Ovary (tissue), 10 donors: ENCODE measurements at regions of chr4 and their contacts with region 1.

Region 1: GRCh38 chr4:187071946-187072600 is 348.4 kb upstream of the FAT1 start:
- DNase-seq: no peak
- H3K4me3 ChIP-seq: no peak overlapping the region
- H3K27ac ChIP-seq: no peak overlapping the region
- H3K4me1 ChIP-seq: no peaks in the 10 kb centered on the region
- H3K27me3 ChIP-seq: no peaks in the 10 kb centered on the region
- CTCF ChIP-seq: no peak
- EP300 ChIP-seq: no peak
- POLR2A ChIP-seq: no peak

Region 2: GRCh38 chr4:186781032-186781917 is 290.8 kb before region 1 on chr4:
- intact Hi-C with region 1: no loop called
- DNase-seq: no peak
- H3K4me3 ChIP-seq: no peak overlapping the region
- H3K27ac ChIP-seq: no peak overlapping the region
- H3K4me1 ChIP-seq: no peaks in the 10 kb centered on the region
- H3K27me3 ChIP-seq: no peaks in the 10 kb centered on the region
- CTCF ChIP-seq: no peak
- EP300 ChIP-seq: no peak
- POLR2A ChIP-seq: no peak

Region 3: GRCh38 chr4:187059021-187059420 is 13.1 kb before region 1 on chr4:
- intact Hi-C with region 1: loop called in 1 of 4 experiments (anchors 2 kb)
- DNase-seq: no peak
- H3K4me3 ChIP-seq: no peak overlapping the region
- H3K27ac ChIP-seq: no peak overlapping the region
- H3K4me1 ChIP-seq: no peaks in the 10 kb centered on the region
- H3K27me3 ChIP-seq: no peaks in the 10 kb centered on the region
- CTCF ChIP-seq: no peak
- EP300 ChIP-seq: no peak
- POLR2A ChIP-seq: no peak